Stomach (tissue), 19 donors: ENCODE measurements at regions of chr16 and their contacts with region 1.

Region 1: GRCh38 chr16:48535831-48536613 is 74.0 kb downstream of the N4BP1 start:
- DNase-seq: peak in 1 of 2 donors; percentile 52
- H3K4me3 ChIP-seq: no peak overlapping the region
- H3K27ac ChIP-seq: peak overlapping the region in 4 of 5 donors; percentile 53 to 85 (median 79)
- H3K4me1 ChIP-seq: peaks cover 28 to 41% (median 33%) of the 10 kb centered on the region in 4 donors
- H3K27me3 ChIP-seq: no peaks in the 10 kb centered on the region
- CTCF ChIP-seq: no peak
- EP300 ChIP-seq: no peak
- POLR2A ChIP-seq: no peak

Region 2: DNA sequence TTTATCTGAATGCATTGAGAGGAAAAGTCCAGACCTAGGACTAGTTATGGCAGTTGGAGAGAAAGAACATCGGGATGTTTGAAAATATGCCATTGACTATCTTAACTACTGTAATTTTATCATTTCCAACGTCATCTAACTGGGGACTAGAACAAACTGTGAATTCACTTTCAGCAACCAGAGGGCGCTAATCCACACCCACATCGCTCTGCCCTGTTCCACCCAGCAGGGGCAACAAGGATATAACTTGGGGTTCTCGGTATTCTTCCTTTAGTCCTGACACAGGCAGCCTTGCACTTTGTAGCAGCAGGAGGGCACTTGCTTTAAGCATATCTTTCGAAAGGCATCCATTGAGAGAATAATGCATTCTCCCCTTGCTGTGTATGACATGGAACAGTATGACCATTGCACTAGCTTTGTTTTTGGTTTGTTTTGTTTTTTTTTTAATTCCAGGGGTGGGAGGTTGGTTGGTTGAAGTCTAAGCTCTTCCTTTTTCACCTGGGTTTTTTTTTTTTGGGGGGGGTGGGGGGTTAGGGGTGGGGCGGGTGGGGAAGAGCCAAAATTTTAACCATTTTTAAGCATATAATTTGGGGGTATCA is 182.4 kb before region 1 on chr16:
- intact Hi-C with region 1: loop called (anchors 5 kb)
- DNase-seq: peak; percentile 63 to 89
- H3K4me3 ChIP-seq: no peak overlapping the region
- H3K27ac ChIP-seq: no peak overlapping the region
- H3K4me1 ChIP-seq: peaks cover 0 to 24% (median 4%) of the 10 kb centered on the region in 4 donors
- H3K27me3 ChIP-seq: no peaks in the 10 kb centered on the region
- CTCF ChIP-seq: peak in 6 of 7 experiments; percentile 15 to 96 (median 80)
- EP300 ChIP-seq: no peak
- POLR2A ChIP-seq: no peak

Region 3: DNA sequence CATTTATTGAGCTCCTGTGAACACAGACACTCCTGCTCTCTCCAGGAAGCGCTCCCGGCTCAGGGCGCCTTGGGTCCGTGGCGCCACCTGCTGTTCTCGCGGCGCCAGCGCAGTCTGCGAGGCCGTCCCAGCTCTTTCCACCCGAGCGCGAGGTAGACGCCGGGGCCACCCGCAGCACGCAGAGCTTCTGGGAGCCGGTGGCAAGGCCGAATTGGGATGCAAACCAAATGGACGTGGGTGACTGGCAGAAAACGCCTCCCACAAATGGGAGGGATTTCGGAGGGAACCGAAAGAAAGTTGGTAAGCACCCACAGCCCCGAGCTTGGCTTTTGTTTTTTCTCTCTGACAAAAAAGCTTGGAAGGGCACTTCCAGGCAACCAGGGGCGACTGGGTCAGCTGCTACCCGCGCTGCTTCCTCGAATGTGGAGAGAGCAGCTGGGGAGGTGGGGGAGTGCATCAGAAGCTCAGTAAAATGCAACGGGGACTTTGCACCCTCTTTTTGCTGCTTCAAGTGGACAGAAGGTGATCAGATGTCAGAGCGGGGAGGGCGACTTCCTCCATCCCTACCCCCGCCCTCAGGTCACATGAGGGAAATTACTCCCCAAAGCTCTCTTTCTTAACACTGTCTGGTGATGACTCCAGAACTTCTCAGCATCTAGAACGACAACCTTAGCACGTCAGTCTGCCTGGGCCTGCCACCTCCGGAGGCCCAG is 87.4 kb after region 1 on chr16:
- intact Hi-C with region 1: loop called (anchors 10 kb)
- DNase-seq: peak; percentile 88 to 93
- H3K4me3 ChIP-seq: peak overlapping the region; percentile 40 to 47 (median 44)
- H3K27ac ChIP-seq: peak overlapping the region in 4 of 5 donors; percentile 27 to 87 (median 76)
- H3K4me1 ChIP-seq: peaks cover 10 to 28% (median 24%) of the 10 kb centered on the region in 4 donors
- H3K27me3 ChIP-seq: no peaks in the 10 kb centered on the region
- CTCF ChIP-seq: peak in 6 of 7 experiments; percentile 39 to 98 (median 94)
- EP300 ChIP-seq: no peak
- POLR2A ChIP-seq: no peak